ENCODE measurements at regions of chr1 and their contacts with region 1.

Region 1: GRCh38 chr1:66331657-66332547 is 202.1 kb upstream of the SGIP1 start:
- DNase-seq: no peak
- ATAC-seq: peak; percentile 9
- H3K4me3 Mint-ChIP-seq: peak overlapping the region; percentile 98
- H3K27ac Mint-ChIP-seq: peak overlapping the region; percentile 98
- H3K4me1 Mint-ChIP-seq: peaks cover 70% of the 10 kb centered on the region
- H3K27me3 Mint-ChIP-seq: no peaks in the 10 kb centered on the region
- CTCF ChIP-seq: no peak

Region 2: DNA sequence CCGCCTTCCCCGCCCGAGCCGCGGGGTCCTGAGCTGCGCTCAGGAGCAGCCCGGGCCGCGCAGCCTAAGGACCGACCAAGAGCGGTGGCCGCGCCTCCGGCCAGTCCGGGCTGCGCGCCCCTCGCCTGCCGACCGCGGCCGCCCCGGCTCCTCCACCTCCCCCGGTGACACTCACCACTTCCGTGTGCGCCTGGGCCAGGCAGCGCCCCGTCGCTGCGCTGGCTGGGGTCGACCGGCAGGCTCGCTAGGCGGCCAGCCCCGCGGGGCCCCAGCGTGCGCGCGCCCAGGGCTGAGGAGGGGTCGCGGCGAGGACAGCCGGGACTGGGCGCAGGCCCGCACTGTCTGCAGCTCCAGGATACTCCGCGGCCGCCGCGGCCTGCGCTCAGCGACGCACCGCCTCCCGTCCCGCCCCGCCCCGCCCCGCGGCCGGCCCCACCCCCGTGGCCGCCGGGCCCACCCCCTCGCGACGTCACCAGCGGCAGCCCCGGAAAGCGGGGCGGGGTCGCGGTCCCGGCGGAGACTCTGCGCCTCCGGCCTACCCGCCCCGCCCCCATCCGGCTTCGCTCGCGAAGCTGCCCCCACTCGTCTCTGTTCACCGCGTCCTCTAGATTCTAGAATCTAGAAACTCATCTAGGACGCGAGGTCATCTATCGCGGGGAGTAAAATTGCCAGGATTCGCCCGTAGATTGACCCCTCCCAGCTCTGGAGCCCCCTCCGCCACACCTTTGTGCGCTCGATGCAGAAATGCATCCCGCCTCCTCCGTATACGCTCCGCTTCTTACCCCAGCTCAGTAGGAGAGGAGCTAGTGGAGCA is 1365.5 kb before region 1 on chr1 and contains the start of gene JAK1:
- CTCF ChIA-PET with region 1: no interaction called
- POLR2A ChIA-PET with region 1: no interaction called
- intact Hi-C with region 1: loop called (anchors 10 kb)
- DNase-seq: peak; percentile 84
- ATAC-seq: peak; percentile 85
- H3K4me3 Mint-ChIP-seq: peak within 1 kb of the TSS; percentile 93
- H3K27ac Mint-ChIP-seq: peak within 1 kb of the TSS; percentile 92
- H3K4me1 Mint-ChIP-seq: peaks cover 49% of the 10 kb centered on the region
- H3K27me3 Mint-ChIP-seq: no peaks in the 10 kb centered on the region
- CTCF ChIP-seq: no peak
- total RNA-seq, gene JAK1: 195 and 215 TPM in 2 replicates

Region 3: GRCh38 chr1:66282343-66282852 is 49.5 kb before region 1 on chr1:
- CTCF ChIA-PET with region 1: interaction called, 21 read pairs
- POLR2A ChIA-PET with region 1: interaction called, 226 read pairs
- intact Hi-C with region 1: loop called (anchors 1 kb)
- DNase-seq: no peak
- ATAC-seq: peak; percentile 82
- H3K4me3 Mint-ChIP-seq: peak overlapping the region; percentile 75
- H3K27ac Mint-ChIP-seq: peak overlapping the region; percentile 98
- H3K4me1 Mint-ChIP-seq: peaks cover 91% of the 10 kb centered on the region
- H3K27me3 Mint-ChIP-seq: no peaks in the 10 kb centered on the region
- CTCF ChIP-seq: no peak

Region 4: DNA sequence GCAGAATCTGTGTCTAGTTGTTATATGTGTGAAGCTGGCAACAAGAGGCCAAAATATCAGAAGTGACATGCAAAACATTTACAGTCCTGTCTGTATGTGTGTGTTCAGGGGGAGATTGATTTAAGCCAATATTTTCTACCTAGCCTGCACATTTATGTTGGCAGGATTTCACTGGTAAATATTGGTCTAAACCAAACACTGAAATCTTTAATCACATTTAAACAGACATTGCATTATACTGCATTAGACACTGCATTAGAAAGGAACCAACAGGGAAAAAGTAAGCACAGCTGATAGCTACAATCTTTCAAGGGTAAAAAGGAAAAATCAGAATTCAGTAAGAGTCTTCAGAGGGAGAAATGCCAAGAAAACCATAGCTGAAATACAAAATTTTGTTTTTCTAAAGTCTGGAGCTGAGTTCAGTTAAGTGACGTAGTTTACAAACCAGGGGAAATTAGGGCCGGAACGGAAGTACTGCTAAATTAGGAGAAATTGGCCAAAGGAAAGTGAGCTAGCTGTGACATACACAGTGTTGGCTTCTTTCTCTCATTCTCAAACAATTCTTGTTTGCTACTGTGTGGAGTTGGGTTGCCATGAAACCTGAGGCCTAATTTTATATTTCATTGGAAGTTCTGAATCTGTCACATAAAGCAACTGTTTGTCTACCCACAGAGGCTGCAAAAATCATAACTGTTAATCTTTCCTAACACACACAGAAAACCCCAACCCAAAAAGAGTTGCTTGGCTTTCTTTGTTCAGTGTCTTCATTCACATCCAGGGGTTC is 15.2 kb before region 1 on chr1:
- CTCF ChIA-PET with region 1: no interaction called
- POLR2A ChIA-PET with region 1: no interaction called
- intact Hi-C with region 1: loop called (anchors 1 kb)
- DNase-seq: no peak
- ATAC-seq: peak; percentile 42
- H3K4me3 Mint-ChIP-seq: no peak overlapping the region
- H3K27ac Mint-ChIP-seq: no peak overlapping the region
- H3K4me1 Mint-ChIP-seq: peaks cover 13% of the 10 kb centered on the region
- H3K27me3 Mint-ChIP-seq: no peaks in the 10 kb centered on the region
- CTCF ChIP-seq: no peak

Region 5: DNA sequence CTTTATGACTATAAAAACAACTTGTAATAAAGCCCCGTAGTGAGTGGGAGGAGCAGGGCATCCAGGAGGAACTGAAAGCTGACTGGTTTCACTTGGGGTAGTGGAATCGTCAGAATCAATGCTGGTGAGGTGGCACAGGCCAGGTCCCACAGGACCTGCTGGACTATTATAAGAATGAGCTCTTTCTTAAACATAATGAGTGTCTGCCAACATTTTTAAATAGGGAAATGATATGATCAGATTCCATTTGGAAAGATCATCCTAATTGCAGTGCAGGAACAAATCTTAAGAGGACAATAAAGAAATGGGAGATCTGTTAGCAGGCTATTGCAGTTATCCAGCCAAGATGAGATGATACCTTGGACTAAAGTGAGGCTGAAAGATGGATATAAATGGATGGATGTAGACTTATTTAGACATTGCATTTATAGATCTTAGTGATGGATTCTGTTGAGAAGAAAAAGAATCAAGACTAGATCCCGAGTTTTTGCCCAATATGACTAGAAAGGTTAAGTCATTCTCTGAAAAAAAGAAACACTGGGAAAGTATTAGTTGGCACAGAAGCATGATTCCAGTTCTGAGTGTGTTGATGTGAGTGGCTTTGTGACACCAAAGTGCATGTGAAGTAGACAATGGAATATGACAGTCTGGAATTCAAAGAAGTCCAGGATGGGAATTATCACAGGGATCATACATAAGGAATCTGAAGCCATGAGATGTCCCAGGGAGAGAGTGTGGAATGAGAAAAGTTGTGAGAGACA is 48.7 kb after region 1 on chr1:
- CTCF ChIA-PET with region 1: interaction called, 10 read pairs
- POLR2A ChIA-PET with region 1: interaction called, 279 read pairs
- intact Hi-C with region 1: loop called (anchors 1 kb)
- DNase-seq: peak; percentile 59
- ATAC-seq: peak; percentile 98
- H3K4me3 Mint-ChIP-seq: peak overlapping the region; percentile 72
- H3K27ac Mint-ChIP-seq: peak overlapping the region; percentile 92
- H3K4me1 Mint-ChIP-seq: peaks cover 87% of the 10 kb centered on the region
- H3K27me3 Mint-ChIP-seq: no peaks in the 10 kb centered on the region
- CTCF ChIP-seq: no peak

Region 6: DNA sequence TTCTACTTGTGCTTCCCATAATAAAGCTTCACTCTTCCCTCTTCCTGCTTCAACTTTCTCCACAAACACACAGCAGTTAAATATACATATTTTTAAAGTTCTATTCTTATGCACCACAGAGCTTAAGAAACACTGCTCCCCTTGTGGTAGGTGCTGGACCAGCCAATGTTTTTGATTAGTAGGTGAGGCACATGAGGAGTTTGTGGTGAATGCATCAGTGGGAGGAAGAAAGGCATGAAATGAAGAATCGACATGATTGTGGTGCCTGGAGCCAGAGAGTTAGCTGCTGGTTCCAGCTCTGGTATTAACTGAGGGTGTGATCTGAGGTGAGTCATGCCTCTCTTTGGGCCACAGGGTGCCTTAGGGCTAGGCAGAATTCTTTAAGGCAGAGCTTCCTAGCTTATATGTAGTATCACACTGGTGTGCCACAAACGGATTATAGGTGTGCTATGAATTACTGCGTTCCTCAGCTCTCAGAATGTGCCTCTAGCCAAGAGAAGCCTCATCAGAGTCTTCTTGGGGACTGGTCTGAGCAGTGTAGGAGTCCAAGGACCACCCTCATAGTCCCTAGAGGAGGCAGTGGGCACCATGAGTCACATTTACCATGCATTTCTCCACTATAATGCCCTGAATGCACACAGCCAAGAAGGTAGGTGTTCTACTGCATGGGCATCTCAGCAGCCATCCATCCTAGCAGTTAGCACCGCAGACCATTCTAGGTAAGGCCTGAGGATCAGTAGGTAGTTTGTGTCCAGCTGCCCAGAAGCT is 104.7 kb after region 1 on chr1:
- CTCF ChIA-PET with region 1: interaction called, 3 read pairs
- POLR2A ChIA-PET with region 1: interaction called, 10 read pairs
- intact Hi-C with region 1: loop called (anchors 1 kb)
- DNase-seq: no peak
- ATAC-seq: peak; percentile 65
- H3K4me3 Mint-ChIP-seq: no peak overlapping the region
- H3K27ac Mint-ChIP-seq: peak overlapping the region; percentile 63
- H3K4me1 Mint-ChIP-seq: peaks cover 38% of the 10 kb centered on the region
- H3K27me3 Mint-ChIP-seq: no peaks in the 10 kb centered on the region
- CTCF ChIP-seq: no peak

Region 7: DNA sequence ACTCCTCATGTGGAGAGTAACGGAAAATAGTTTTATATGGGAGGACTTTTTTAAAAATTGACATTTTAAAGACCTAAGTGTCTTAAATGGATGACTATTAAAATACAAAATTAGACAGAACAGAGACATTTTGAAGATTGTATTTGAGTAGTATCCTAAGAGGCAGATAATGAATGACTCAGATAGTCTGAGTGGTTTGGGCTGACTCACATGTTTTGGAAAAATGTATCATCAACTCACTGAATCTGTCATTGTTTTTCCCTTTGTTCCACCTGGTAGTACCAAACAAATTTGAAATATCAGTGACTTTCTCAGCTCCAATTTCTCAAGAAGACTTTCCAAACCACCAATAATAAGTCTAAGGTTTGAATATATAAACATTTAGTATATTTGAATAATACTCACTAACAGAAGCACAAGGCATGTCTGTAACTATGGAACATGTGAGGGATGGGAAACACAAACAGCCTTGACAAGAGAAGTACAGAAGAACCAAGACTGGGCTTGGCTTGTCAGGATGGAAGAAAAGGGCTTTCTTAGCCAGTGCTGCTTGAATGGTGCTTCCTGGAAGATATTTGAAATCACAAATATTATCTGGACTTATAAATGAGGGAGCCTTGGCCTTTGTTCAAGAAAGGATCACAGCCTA is 292.6 kb after region 1 on chr1:
- CTCF ChIA-PET with region 1: no interaction called
- POLR2A ChIA-PET with region 1: no interaction called
- intact Hi-C with region 1: no loop called
- DNase-seq: no peak
- ATAC-seq: no peak
- H3K4me3 Mint-ChIP-seq: no peak overlapping the region
- H3K27ac Mint-ChIP-seq: no peak overlapping the region
- H3K4me1 Mint-ChIP-seq: no peaks in the 10 kb centered on the region
- H3K27me3 Mint-ChIP-seq: peaks cover 4% of the 10 kb centered on the region
- CTCF ChIP-seq: no peak

Measured in activated B cell treated with CpG ODN at 0.5 μM for 24 hours (primary cell).